ENCODE measurements at regions of chr19 and their contacts with region 1.

Region 1: GRCh38 chr19:8513687-8514504 is at the start of gene ZNF414:
- DNase-seq: peak; percentile 96
- H3K4me3 ChIP-seq: peak within 1 kb of the TSS; percentile 69
- H3K27ac ChIP-seq: peak within 1 kb of the TSS; percentile 65
- H3K4me1 ChIP-seq: peaks cover 28% of the 10 kb centered on the region
- CTCF ChIP-seq: no peak
- total RNA-seq, gene ZNF414: 3.1 and 8.7 TPM in 2 replicates

Region 2: DNA sequence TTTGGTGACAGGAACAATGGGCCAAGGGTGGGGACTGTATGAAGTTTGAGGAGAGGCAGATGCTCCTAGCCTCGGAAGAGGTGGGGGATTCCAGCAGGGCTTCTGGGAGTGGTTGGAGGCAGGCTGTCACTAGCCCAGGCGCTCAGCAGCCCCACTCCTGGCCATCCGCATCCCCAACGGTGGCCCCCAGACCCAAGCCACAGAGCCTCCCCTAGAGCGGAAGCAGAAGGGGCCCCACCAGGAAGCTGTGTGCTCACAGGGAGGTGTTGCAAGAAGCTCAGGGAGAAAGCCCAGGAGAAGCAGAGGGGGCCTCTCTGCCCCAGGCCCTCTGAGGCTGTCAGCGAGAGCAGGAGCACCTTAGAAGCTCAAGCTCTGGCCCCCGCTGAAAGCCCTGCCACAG is 19.7 kb before region 1 on chr19:
- CTCF ChIA-PET with region 1: interaction called, 3 read pairs
- POLR2A ChIA-PET with region 1: interaction called, 14 read pairs
- intact Hi-C with region 1: no loop called
- DNase-seq: peak; percentile 45
- H3K4me3 ChIP-seq: peak overlapping the region; percentile 19
- H3K27ac ChIP-seq: no peak overlapping the region
- H3K4me1 ChIP-seq: peaks cover 13% of the 10 kb centered on the region
- CTCF ChIP-seq: no peak

Region 3: GRCh38 chr19:8580710-8581281 is 66.9 kb after region 1 on chr19:
- CTCF ChIA-PET with region 1: interaction called, 3 read pairs
- POLR2A ChIA-PET with region 1: no interaction called
- intact Hi-C with region 1: loop called (anchors 5 kb)
- DNase-seq: peak; percentile 84
- H3K4me3 ChIP-seq: no peak overlapping the region
- H3K27ac ChIP-seq: no peak overlapping the region
- H3K4me1 ChIP-seq: peaks cover 18% of the 10 kb centered on the region
- CTCF ChIP-seq: peak; percentile 98

Measured in OCI-LY7 (cell line).